ENCODE measurements at regions of chr5 and their contacts with region 1.

Region 1: GRCh38 chr5:134101686-134102439 is 12.6 kb upstream of the TCF7 start:
- DNase-seq: peak; percentile 58
- ATAC-seq: peak; percentile 49
- H3K4me3 ChIP-seq: no peak overlapping the region
- H3K27ac ChIP-seq: no peak overlapping the region
- H3K4me1 ChIP-seq: peaks cover 98% of the 10 kb centered on the region
- H3K27me3 ChIP-seq: peaks cover 0 to 2% of the 10 kb centered on the region in 2 experiments; a peak in 1 of 5 replicates
- CTCF ChIP-seq: peak; percentile 87
- EP300 ChIP-seq: no peak
- POLR2A ChIP-seq: no peak
- RAD21 ChIP-seq: peak; percentile 80

Region 2: GRCh38 chr5:134018154-134018985 is 83.5 kb before region 1 on chr5:
- CTCF ChIA-PET with region 1: no interaction called
- POLR2A ChIA-PET with region 1: interaction called, 18 read pairs
- in situ Hi-C with region 1: no loop called
- intact Hi-C with region 1: no loop called
- DNase-seq: peak; percentile 91
- ATAC-seq: peak; percentile 72
- H3K4me3 ChIP-seq: peak overlapping the region; percentile 24 to 60 (median 58)
- H3K27ac ChIP-seq: peak overlapping the region; percentile 93
- H3K4me1 ChIP-seq: peaks cover 60% of the 10 kb centered on the region
- H3K27me3 ChIP-seq: no peaks in the 10 kb centered on the region
- CTCF ChIP-seq: 0 out of 2 replicates have a peak, but pooled peaks have one; percentile 22
- EP300 ChIP-seq: peak; percentile 48 to 64; a peak in 2 of 4 replicates
- POLR2A ChIP-seq: peak in 1 of 2 experiments; percentile 67
- RAD21 ChIP-seq: no peak

Region 3: GRCh38 chr5:134051305-134051704 is 50.6 kb before region 1 on chr5:
- CTCF ChIA-PET with region 1: no interaction called
- POLR2A ChIA-PET with region 1: interaction called, 29 read pairs
- in situ Hi-C with region 1: no loop called
- intact Hi-C with region 1: loop called (anchors 2 kb)
- DNase-seq: no peak
- ATAC-seq: no peak
- H3K4me3 ChIP-seq: no peak overlapping the region
- H3K27ac ChIP-seq: no peak overlapping the region
- H3K4me1 ChIP-seq: peaks cover 59% of the 10 kb centered on the region
- H3K27me3 ChIP-seq: no peaks in the 10 kb centered on the region
- CTCF ChIP-seq: no peak
- EP300 ChIP-seq: no peak
- POLR2A ChIP-seq: no peak
- RAD21 ChIP-seq: no peak

Region 4: DNA sequence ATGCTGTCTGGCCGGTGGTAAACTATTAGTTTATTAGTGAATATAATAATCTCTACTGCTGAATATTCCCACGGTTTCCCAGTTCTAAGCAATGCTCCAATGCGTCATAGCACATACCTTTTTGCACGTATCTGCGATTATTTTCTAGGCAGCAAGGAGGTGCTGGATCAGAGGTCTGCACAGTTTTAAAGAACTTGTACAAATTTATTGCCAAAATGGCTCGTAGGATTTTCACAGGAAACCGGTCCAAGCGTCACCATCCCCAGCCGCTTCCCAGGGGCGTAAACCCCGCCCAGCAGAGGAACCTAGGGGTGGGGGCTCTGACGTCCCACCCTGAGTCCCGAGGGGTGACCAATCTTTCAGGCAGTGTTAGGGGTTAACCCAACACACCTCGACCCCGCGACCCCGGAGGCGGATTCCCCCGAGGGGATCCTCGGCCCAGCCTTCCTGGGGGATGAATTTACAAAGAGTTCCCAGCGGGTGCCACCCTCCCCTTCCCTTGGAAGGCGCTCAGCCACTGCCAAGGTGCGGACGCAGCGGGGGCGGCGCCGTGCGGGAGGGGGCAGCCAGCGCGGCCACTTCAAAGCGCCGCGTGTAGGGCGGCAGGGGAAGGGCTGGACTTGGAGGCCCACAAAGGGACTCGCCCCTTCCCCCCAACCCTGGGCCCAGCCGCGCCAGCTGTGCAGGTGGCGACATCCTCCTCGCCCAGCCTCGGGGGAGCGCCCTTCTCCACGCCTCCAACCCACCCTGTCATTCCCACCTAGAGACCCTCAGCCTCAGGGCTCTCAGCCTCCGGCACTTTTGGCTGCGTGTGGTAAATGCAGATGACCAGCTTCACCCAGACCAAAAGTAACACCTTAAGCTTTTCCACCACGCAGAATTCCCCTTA is 30.9 kb before region 1 on chr5:
- CTCF ChIA-PET with region 1: no interaction called
- POLR2A ChIA-PET with region 1: interaction called, 39 read pairs
- in situ Hi-C with region 1: no loop called
- intact Hi-C with region 1: loop called (anchors 2 kb)
- DNase-seq: peak; percentile 72
- ATAC-seq: peak; percentile 88
- H3K4me3 ChIP-seq: peak overlapping the region; percentile 63 to 75 (median 68)
- H3K27ac ChIP-seq: peak overlapping the region; percentile 58
- H3K4me1 ChIP-seq: peaks cover 47% of the 10 kb centered on the region
- H3K27me3 ChIP-seq: no peaks in the 10 kb centered on the region
- CTCF ChIP-seq: peak; percentile 81
- EP300 ChIP-seq: peak in 1 of 2 experiments; percentile 84; a peak in 2 of 4 replicates
- POLR2A ChIP-seq: peak; percentile 13 to 24; a peak in 1 of 4 replicates
- RAD21 ChIP-seq: no peak; the same call in 1 of the 2 replicates

Region 5: DNA sequence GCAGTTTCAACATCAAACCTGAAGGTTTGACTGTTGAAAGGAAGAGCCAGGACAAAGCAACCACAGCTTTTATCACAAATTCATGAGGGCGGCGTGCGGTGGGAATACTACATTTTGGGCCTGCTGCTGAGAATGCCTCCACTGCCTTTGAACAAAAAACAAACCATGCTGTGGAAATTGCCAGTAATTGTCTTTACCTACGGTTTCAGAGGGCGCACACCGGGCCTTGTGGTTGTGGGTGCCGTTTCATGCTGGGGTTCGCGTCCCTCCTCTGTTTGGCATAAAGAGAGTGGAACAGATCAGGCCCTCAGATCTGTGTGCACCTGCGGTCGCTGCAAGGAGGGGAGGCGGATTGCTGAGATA is 14.9 kb before region 1 on chr5:
- CTCF ChIA-PET with region 1: no interaction called
- POLR2A ChIA-PET with region 1: interaction called, 70 read pairs
- in situ Hi-C with region 1: no loop called
- intact Hi-C with region 1: no loop called
- DNase-seq: no peak
- ATAC-seq: no peak
- H3K4me3 ChIP-seq: no peak overlapping the region
- H3K27ac ChIP-seq: no peak overlapping the region
- H3K4me1 ChIP-seq: peaks cover 75% of the 10 kb centered on the region
- H3K27me3 ChIP-seq: no peaks in the 10 kb centered on the region
- CTCF ChIP-seq: no peak
- EP300 ChIP-seq: no peak
- POLR2A ChIP-seq: no peak
- RAD21 ChIP-seq: no peak

Region 6: DNA sequence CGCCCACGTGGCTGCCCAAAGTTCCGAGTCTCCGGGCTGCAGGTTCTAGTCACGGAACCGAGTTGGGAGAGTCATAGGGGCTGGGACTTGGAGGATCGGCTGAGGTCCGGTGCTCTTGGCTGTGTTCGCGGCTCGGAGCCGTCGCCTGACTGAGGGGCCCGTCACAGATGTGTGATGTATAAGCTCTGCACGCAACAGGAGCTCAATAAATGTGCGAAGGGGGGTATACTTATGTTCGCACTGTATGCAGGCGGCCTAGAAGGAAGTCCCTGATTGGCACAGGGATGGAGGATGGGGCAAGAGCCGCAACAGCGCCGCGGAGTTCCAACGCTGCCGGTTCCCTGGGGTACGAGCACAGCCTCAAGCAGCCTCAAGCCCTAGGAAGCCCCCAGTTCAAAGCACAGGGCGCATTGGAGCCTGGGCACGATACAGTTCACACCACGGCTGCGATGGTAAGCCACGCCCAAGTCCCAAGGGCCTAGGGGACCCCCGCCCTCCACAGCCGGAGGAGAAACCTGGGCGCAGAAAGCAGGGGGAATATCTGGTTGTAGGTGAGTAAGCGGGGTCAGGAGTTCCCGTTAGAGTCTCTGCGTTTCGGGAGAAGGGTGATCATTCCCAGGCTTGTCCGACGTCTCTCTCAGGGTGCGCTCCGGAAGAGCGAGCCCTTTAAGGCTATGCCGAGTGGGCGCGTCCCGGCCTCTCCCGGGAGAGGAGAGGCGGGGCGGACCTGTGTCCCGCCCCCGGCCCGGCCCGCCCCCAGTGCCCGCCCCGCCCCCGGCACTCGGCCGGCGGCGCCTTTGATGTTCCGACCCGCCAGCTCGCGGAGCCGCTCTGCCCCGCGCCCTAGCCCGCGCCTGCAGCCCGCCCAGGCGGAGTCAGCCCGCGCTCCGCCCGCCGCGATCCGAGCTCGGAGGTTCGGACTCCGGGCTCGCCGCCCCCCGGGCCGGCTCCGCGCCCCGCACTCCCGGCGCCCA is 12.3 kb after region 1 on chr5 and contains the start of gene TCF7:
- CTCF ChIA-PET with region 1: no interaction called
- POLR2A ChIA-PET with region 1: interaction called, 40 read pairs
- in situ Hi-C with region 1: no loop called
- intact Hi-C with region 1: no loop called
- DNase-seq: peak; percentile 68
- ATAC-seq: peak; percentile 89
- H3K4me3 ChIP-seq: peak within 1 kb of the TSS; percentile 68 to 80 (median 78)
- H3K27ac ChIP-seq: no peak within 1 kb of the TSS
- H3K4me1 ChIP-seq: peaks cover 64% of the 10 kb centered on the region
- H3K27me3 ChIP-seq: peaks cover 2 to 25% of the 10 kb centered on the region in 2 experiments; a peak in 3 of 5 replicates
- CTCF ChIP-seq: no peak
- EP300 ChIP-seq: no peak
- POLR2A ChIP-seq: peak; percentile 58 to 65; a peak in 3 of 4 replicates
- RAD21 ChIP-seq: peak; percentile 18; the same call in 1 of the 2 replicates
- total RNA-seq, gene TCF7: 6.8 and 7.9 TPM in 2 replicates

Region 7: GRCh38 chr5:134140530-134141201 is 38.8 kb after region 1 on chr5:
- CTCF ChIA-PET with region 1: interaction called, 14 read pairs
- POLR2A ChIA-PET with region 1: interaction called, 31 read pairs
- in situ Hi-C with region 1: no loop called
- intact Hi-C with region 1: loop called (anchors 1 kb)
- DNase-seq: peak; percentile 78
- ATAC-seq: peak; percentile 78
- H3K4me3 ChIP-seq: no peak overlapping the region
- H3K27ac ChIP-seq: no peak overlapping the region
- H3K4me1 ChIP-seq: peaks cover 24% of the 10 kb centered on the region
- H3K27me3 ChIP-seq: no peaks in the 10 kb centered on the region
- CTCF ChIP-seq: peak; percentile 84
- EP300 ChIP-seq: no peak
- POLR2A ChIP-seq: no peak
- RAD21 ChIP-seq: peak; percentile 76

Measured in HepG2 (cell line).